ENCODE measurements at regions of chr9 and their contacts with region 1.

Region 1: GRCh38 chr9:97367729-97368128 is 44.2 kb upstream of the TDRD7 start:
- DNase-seq: no peak
- H3K4me3 ChIP-seq: no peak overlapping the region
- CTCF ChIP-seq: no peak

Region 2: GRCh38 chr9:97299809-97300414 is 67.8 kb before region 1 on chr9:
- in situ Hi-C with region 1: loop called (anchors 5 kb)
- DNase-seq: no peak
- H3K4me3 ChIP-seq: no peak overlapping the region
- CTCF ChIP-seq: no peak

Region 3: GRCh38 chr9:97411789-97412625 is 44.3 kb after region 1 on chr9 and contains the start of gene TDRD7:
- in situ Hi-C with region 1: no loop called
- DNase-seq: peak; percentile 24
- H3K4me3 ChIP-seq: peak within 1 kb of the TSS; percentile 70
- CTCF ChIP-seq: peak; percentile 92